Body of pancreas (tissue), 4 donors: ENCODE measurements at regions of chr1 and their contacts with region 1.

Region 1: DNA sequence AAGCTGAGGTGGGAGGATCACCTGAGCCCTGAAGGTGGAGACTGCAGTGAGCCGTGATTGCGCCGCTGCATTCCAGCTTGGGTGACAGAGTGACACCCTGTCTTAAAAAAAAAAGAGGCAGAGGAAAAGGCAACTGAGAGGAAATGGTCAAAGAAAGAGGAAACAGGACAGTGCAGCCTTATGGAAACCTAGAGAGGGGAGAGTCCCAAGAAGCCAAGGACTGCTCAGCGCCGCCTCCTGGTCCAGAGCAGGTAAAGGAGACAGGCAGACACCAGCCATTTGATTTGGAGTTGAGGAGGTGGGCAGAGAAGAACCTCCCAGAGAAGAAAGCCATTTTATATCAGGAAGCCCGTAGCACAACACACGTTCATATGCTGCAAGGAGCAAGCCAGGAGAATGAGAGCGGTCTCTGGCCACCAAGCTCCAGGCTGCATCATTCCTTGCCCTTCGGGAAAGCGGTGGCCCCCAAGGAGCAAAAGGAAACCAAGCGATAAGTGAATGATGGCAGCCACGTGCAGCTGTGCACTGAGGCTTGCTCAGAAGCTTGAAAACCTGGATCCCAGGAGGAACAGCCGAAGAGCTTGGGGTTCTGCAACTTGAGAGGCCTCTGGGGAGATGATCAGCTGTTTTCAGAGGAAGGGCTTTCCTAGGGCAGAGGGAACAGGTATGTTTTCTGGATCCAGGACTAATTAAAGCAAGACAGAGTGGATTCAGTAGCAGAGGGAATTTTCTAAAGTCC is 33.7 kb downstream of the LRRC42 start:
- DNase-seq: no peak
- ATAC-seq: no peak
- H3K4me3 ChIP-seq: no peak overlapping the region
- H3K27ac ChIP-seq: no peak overlapping the region
- H3K4me1 ChIP-seq: peaks cover 16% of the 10 kb centered on the region
- H3K27me3 ChIP-seq: no peaks in the 10 kb centered on the region
- CTCF ChIP-seq: no peak
- POLR2A ChIP-seq: no peak

Region 2: GRCh38 chr1:54037476-54037875 is 57.6 kb after region 1 on chr1:
- intact Hi-C with region 1: loop called (anchors 10 kb)
- DNase-seq: no peak
- ATAC-seq: no peak
- H3K4me3 ChIP-seq: no peak overlapping the region
- H3K27ac ChIP-seq: no peak overlapping the region
- H3K4me1 ChIP-seq: no peaks in the 10 kb centered on the region
- H3K27me3 ChIP-seq: no peaks in the 10 kb centered on the region
- CTCF ChIP-seq: no peak
- POLR2A ChIP-seq: no peak